ENCODE measurements at regions of chr5 and their contacts with region 1.

Region 1: GRCh38 chr5:39209924-39210323 is 9.4 kb downstream of the FYB1 start:
- DNase-seq: peak; percentile 92
- ATAC-seq: peak; percentile 77
- H3K4me3 Mint-ChIP-seq: peak overlapping the region; percentile 66
- H3K27ac Mint-ChIP-seq: peak overlapping the region; percentile 93
- H3K4me1 Mint-ChIP-seq: peaks cover 93% of the 10 kb centered on the region
- H3K27me3 Mint-ChIP-seq: no peaks in the 10 kb centered on the region

Region 2: GRCh38 chr5:39187831-39188731 is 21.8 kb before region 1 on chr5:
- CTCF ChIA-PET with region 1: interaction called, 40 read pairs
- POLR2A ChIA-PET with region 1: interaction called, 11 read pairs
- DNase-seq: no peak
- ATAC-seq: peak; percentile 18
- H3K4me3 Mint-ChIP-seq: peak overlapping the region; percentile 72
- H3K27ac Mint-ChIP-seq: peak overlapping the region; percentile 92
- H3K4me1 Mint-ChIP-seq: peaks cover 89% of the 10 kb centered on the region
- H3K27me3 Mint-ChIP-seq: no peaks in the 10 kb centered on the region

Region 3: GRCh38 chr5:39194466-39195136 is 15.3 kb before region 1 on chr5:
- CTCF ChIA-PET with region 1: interaction called, 40 read pairs
- POLR2A ChIA-PET with region 1: interaction called, 84 read pairs
- DNase-seq: peak; percentile 45
- ATAC-seq: peak; percentile 24
- H3K4me3 Mint-ChIP-seq: peak overlapping the region; percentile 79
- H3K27ac Mint-ChIP-seq: peak overlapping the region; percentile 87
- H3K4me1 Mint-ChIP-seq: peaks cover 75% of the 10 kb centered on the region
- H3K27me3 Mint-ChIP-seq: no peaks in the 10 kb centered on the region

Region 4: GRCh38 chr5:39231705-39232525 is 22.0 kb after region 1 on chr5:
- CTCF ChIA-PET with region 1: interaction called, 10 read pairs
- POLR2A ChIA-PET with region 1: no interaction called
- DNase-seq: no peak
- ATAC-seq: peak; percentile 86
- H3K4me3 Mint-ChIP-seq: peak overlapping the region; percentile 29
- H3K27ac Mint-ChIP-seq: peak overlapping the region; percentile 73
- H3K4me1 Mint-ChIP-seq: peaks cover 18% of the 10 kb centered on the region
- H3K27me3 Mint-ChIP-seq: no peaks in the 10 kb centered on the region